GM10248 (cell line): ENCODE measurements at regions of chr22 and their contacts with region 1.

Region 1: DNA sequence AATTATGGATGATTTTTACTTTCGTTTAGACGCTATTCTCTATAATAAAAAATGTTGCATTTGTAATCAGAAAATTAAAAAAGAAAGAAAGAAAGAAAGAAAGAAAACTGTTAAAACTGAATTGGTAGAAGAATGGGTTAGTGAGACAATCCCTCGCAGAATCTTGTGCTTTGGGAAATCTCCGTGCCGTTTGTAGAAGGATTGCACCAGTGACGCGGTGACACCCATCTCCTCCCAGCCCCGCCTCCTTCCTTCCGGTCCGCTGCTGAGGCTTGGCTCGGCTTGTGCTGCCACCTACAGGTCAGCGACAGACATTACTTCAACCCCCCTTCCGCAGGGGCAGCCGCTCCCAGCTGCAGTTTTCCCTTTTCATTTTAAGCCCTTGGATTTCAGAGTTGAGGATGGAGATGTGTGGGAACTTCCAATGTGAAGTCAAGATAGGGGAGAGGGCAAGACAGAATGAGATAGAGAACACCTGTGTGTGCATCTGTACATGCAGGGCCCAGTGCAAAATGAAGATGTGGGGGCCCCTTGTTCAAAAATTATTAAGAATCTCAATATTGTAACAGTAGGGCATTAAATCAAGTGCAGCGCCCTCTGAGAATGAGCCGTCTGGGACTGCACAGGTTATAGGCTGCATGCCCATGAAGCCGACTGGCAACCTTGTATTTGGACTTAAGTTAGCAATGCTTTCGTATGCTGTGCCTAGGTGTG is 41.1 kb downstream of the TST start:
- DNase-seq: peak; percentile 95
- CTCF ChIP-seq: peak; percentile 95

Region 2: DNA sequence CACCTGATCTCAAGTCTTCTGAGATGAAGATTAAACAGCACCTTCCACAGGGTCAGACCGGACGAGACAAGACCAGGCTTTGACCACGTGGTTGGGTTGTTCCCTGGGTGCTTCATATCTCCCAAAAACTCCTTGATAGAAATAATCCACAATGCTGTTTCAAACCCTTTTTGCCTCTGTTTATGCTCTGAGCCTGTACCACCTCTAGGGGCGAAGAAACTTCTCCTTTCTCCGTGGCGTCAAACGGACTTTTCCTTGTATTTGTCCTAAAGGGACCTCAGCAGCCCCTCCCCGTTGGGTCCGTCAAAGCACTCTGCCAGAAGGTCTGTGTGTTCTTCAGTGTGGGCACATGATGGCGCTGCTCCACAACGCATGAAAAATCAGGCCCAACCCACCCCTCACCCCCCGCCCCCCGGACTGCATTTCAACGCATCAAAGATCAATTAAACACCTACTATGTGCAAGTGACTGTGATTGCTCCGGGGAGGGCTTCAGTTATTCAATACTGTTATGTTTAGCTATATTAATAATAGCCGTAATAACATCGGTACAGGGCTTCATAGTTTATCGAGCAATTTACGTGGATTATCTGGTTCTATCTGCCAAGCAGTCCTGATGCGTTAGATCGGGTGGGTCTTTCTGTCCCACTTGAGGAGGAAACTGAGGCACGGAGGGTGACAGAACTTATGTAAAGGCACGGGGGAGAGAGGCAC is 431.9 kb before region 1 on chr22:
- CTCF ChIA-PET with region 1: interaction called, 13 read pairs
- POLR2A ChIA-PET with region 1: no interaction called
- DNase-seq: peak; percentile 65
- CTCF ChIP-seq: peak; percentile 58

Region 3: DNA sequence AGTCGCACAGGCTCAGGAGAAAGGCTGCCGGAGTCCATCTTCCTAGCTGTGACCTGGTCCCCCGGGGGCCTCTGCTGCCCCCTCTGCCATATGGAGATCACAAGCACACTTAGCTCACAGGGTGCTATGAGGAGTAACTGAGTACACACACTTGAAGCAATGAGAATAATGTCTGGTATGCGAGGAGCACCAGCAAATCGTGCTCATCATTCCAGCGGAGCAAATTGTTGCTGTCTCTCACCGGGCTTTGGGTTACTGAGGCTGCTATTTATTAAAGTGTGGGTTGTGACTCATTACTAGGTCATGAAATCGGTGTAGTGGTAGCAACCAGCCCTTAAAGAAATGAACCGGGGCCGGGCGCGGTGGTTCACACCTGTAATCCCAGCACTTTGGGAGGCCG is 401.1 kb before region 1 on chr22:
- CTCF ChIA-PET with region 1: no interaction called
- POLR2A ChIA-PET with region 1: no interaction called
- DNase-seq: no peak
- CTCF ChIP-seq: no peak

Region 4: GRCh38 chr22:36775964-36776669 is 202.0 kb before region 1 on chr22 and contains the start of gene IFT27:
- CTCF ChIA-PET with region 1: interaction called, 34 read pairs
- POLR2A ChIA-PET with region 1: interaction called, 3 read pairs
- DNase-seq: peak; percentile 100
- CTCF ChIP-seq: no peak

Region 5: DNA sequence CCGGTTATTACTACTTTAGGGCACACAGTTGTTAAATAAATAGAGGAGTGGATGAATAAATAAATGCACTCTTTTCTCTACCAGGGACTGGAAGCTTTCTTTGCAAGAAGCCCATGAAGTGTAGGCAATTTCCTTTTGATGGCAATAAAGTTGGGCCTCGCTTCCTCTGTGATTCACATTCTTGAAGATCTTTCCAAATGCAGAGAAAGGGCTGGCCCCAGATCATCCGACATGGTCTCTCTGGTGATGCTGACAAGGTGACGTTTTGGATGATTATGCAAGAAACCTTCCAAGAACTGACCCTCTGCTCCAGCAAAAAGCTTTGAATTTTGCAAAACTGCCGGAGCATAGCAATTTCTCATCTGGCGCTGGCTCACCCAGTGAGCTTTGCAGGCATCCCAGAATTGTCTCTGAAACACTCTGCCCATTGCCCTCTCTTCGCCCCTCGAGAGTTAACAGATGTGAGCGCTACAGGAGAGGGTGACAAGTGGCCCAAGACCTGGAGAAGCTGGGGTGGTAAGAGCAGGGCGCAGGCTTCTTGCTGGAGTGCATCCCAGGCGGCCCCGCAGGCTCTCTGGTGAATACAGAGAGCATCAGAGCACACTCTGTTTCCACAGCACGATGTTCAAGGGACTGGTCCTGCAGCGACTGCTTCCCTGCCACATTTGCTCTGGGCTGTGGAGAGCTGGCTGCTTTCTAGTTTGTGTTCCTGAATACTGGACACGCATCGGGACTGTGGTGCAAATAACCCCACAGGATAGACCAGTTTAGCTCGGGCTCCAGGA is 190.7 kb before region 1 on chr22:
- CTCF ChIA-PET with region 1: interaction called, 34 read pairs
- POLR2A ChIA-PET with region 1: no interaction called
- DNase-seq: no peak
- CTCF ChIP-seq: no peak

Region 6: DNA sequence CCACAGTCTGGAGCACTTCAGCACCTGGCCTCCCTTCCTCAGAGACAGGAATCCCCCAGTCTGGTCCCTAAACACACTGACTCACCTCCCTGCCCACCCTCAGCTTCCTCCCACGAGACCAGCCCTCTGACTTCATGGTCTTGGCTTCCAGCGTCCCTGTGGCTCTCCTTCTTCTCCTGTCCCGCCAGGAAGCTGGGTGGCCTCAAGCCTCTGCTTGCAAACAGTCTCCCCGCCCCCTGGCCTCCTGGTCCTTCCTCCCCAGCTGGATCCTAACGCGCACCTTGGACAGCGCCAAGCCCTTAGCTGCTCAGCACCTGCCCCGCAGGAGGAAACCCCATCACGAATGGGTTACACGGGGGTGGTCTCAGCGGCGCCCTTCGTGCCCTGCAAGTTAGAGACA is 112.8 kb before region 1 on chr22:
- CTCF ChIA-PET with region 1: interaction called, 100 read pairs
- POLR2A ChIA-PET with region 1: no interaction called
- DNase-seq: no peak
- CTCF ChIP-seq: no peak

Region 7: DNA sequence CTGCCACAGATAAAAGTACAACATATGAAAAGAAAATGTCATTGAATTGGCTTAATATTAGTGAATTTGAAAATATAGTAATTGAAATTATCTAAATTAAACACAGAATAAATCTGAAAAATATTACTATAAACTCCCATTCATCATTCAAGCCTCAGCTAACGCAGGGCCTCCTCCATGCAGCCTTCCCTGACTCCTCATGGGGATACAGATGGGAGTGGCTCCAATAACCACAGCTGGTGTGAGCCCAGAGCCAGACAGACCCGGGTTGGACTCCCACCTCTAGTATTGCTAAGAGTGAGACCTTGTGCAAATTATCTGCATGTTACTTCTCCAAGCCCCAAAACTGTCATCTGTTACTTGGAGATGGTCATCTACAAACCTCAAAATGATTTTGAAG is 19.7 kb before region 1 on chr22:
- CTCF ChIA-PET with region 1: interaction called, 45 read pairs
- POLR2A ChIA-PET with region 1: no interaction called
- DNase-seq: no peak
- CTCF ChIP-seq: no peak

Region 8: GRCh38 chr22:36998620-36999340 is 20.7 kb after region 1 on chr22:
- CTCF ChIA-PET with region 1: interaction called, 27 read pairs
- POLR2A ChIA-PET with region 1: no interaction called
- DNase-seq: no peak
- CTCF ChIP-seq: peak; percentile 21

Region 9: DNA sequence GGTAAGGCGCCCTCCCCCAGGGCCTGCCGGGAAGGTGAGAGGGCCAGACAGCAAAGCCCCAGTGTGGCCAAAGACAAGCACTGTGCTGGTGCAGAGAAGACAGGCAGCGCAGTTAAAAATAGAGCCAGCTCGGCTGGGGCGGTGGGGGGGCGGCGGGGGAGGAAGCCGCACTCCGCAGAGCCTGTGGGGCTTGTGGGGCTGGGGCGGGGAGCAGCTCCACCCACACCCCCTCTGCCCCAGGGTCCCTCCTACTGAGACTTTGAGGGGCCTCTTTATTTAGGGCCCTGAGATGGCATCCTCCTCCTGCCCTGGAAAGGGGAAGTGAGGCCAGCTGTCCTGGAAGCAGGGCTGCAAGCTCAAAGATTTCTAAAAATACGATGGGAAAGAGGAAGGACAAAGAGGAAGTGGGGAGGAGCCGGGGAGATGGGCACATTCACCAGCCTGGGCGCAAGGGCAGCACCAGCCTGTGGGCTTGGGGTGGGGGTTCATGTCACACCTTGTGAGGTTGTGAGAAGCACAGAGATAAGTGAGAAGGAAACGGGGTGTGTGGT is 306.8 kb after region 1 on chr22:
- CTCF ChIA-PET with region 1: no interaction called
- POLR2A ChIA-PET with region 1: no interaction called
- DNase-seq: peak; percentile 68
- CTCF ChIP-seq: no peak